PC-3 (cell line): ENCODE measurements at regions of chr20 and their contacts with region 1.

Region 1: DNA sequence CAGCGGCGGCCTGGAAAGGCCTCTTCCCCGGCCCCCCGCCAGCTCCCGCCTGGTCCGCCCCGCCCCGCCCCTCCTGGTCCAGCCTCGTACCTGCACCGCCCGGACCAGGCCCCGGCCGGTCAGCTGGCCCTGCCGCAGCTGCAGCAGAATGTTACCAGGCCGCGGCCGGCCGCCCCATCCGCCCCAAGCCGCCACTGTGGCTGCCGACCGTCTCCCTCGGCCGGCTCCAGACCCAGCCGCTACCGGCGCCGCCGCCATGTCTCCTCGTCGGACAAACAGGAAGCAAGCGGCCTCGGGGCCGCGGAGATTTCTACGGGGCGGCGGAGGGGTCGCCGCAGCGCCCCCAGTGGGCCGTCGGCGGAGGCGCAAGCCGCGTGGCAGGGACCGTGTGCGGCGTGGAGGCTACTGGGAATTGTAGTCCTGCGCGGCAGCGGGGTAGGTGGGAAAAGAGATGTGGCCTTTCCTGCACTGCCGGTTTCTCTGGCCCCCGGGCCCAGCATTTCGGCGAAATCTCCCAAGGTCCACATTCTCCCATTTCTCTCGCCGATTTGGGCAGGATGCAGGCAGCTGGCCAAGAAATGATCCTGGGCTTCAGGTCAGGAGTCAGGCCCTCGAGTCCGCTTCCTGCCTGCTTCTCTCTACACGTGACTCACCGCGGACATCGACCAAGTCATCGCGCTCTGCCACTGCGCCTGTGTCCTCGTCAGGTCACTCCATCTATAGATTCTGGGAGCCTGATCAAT is at the start of gene TRPC4AP:
- DNase-seq: peak; percentile 94
- ATAC-seq: peak; percentile 88
- H3K4me3 ChIP-seq: peak within 1 kb of the TSS; percentile 97
- H3K27ac ChIP-seq: peak within 1 kb of the TSS; percentile 65
- H3K4me1 ChIP-seq: peaks cover 20% of the 10 kb centered on the region
- H3K27me3 ChIP-seq: no peaks in the 10 kb centered on the region
- CTCF ChIP-seq: peak; percentile 92
- total RNA-seq, gene TRPC4AP: 46.9 and 52.6 TPM in 2 replicates

Region 2: GRCh38 chr20:34876162-34877001 is 216.3 kb before region 1 on chr20 and contains the start of gene ACSS2:
- CTCF ChIA-PET with region 1: interaction called, 7 read pairs
- POLR2A ChIA-PET with region 1: no interaction called
- intact Hi-C with region 1: loop called (anchors 5 kb)
- DNase-seq: peak; percentile 98
- ATAC-seq: peak; percentile 85
- H3K4me3 ChIP-seq: peak within 1 kb of the TSS; percentile 84
- H3K27ac ChIP-seq: peak within 1 kb of the TSS; percentile 52
- H3K4me1 ChIP-seq: peaks cover 20% of the 10 kb centered on the region
- H3K27me3 ChIP-seq: no peaks in the 10 kb centered on the region
- CTCF ChIP-seq: no peak
- total RNA-seq, gene ACSS2: 78.9 and 125 TPM in 2 replicates

Region 3: GRCh38 chr20:34904202-34904621 is 188.5 kb before region 1 on chr20:
- CTCF ChIA-PET with region 1: no interaction called
- POLR2A ChIA-PET with region 1: no interaction called
- intact Hi-C with region 1: no loop called
- DNase-seq: no peak
- ATAC-seq: no peak
- H3K4me3 ChIP-seq: no peak overlapping the region
- H3K27ac ChIP-seq: no peak overlapping the region
- H3K4me1 ChIP-seq: peaks cover 25% of the 10 kb centered on the region
- H3K27me3 ChIP-seq: no peaks in the 10 kb centered on the region
- CTCF ChIP-seq: no peak

Region 4: GRCh38 chr20:35013421-35014411 is 79.0 kb before region 1 on chr20:
- CTCF ChIA-PET with region 1: no interaction called
- POLR2A ChIA-PET with region 1: no interaction called
- intact Hi-C with region 1: no loop called
- DNase-seq: no peak
- ATAC-seq: 0 out of 2 replicates have a peak, but pooled peaks have one; percentile 21
- H3K4me3 ChIP-seq: no peak overlapping the region
- H3K27ac ChIP-seq: no peak overlapping the region
- H3K4me1 ChIP-seq: no peaks in the 10 kb centered on the region
- H3K27me3 ChIP-seq: no peaks in the 10 kb centered on the region
- CTCF ChIP-seq: no peak

Region 5: DNA sequence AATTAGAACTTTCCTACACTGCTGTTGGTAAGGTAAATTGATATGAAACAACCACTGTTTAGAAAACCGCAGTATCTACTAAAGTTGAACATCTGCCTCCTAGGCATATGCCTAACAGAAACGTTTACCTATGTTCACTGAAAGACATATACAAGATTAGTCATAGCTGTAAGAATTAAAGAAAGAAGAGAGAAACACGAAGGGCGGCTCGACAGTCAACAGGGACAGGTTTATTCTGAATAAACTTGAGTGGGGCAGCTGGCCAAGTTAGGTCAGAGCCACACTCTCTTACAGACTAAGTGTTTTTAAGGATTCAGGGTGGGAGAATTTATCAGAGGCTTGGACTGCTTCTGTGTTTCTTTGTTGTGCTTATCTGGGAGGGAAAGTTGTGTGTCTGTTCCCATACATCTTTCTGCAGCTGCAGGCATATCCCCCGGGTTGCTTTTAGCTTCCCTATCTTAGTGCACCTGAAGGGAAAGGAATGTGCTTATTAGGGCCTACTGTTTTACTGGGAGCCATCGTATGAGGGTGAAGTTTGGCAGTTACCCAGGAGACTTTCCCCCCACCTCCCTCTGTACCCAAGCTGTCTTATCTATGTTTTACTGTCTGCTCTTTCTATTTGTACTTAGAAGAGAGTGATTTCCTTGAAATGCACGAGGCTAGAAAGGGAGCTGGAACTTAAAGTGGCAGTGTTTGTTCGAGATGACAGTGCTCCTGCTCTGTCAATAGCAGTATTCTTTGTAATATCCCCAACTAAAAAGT is 99.6 kb after region 1 on chr20:
- CTCF ChIA-PET with region 1: interaction called, 10 read pairs
- POLR2A ChIA-PET with region 1: no interaction called
- intact Hi-C with region 1: no loop called
- DNase-seq: peak; percentile 88
- ATAC-seq: peak; percentile 94
- H3K4me3 ChIP-seq: no peak overlapping the region
- H3K27ac ChIP-seq: 0 out of 2 replicates have a peak overlapping the region, but pooled peaks have one; percentile 18
- H3K4me1 ChIP-seq: peaks cover 27% of the 10 kb centered on the region
- H3K27me3 ChIP-seq: no peaks in the 10 kb centered on the region
- CTCF ChIP-seq: no peak

Region 6: DNA sequence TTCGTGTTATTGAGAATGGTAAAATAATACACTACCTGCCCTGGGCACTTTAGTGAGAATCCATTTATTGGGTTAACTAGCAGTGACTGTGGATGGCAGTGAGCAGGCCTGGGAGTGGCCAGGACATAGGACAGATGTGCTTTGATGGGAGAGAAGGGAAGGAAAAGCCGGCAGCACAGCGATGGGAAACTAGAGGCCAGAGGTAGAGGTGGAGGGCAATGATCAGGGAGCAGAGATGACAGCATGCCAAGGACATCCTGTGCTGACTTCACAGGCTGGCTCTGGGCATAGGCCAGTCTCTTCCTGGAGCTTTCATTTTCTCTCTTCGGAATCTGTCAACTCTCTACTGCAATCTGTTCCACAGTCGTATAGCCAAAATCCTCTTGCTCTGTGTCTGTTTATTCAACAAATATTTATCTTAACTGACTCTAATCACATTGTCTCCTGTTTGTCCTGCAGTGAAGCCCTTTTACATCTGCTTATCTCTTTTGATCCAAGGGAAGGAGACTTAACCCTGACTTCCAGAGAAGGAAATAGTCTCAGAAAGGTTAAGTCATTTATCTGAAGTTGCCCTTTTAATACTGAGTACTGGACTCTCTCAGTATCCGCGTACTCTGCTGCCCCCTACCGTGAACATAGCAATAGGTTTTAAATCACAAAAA is 115.4 kb after region 1 on chr20:
- CTCF ChIA-PET with region 1: interaction called, 24 read pairs
- POLR2A ChIA-PET with region 1: no interaction called
- intact Hi-C with region 1: loop called (anchors 1 kb)
- DNase-seq: peak; percentile 86
- ATAC-seq: peak; percentile 98
- H3K4me3 ChIP-seq: peak overlapping the region; percentile 32; the same call in 1 of the 2 replicates
- H3K27ac ChIP-seq: no peak overlapping the region
- H3K4me1 ChIP-seq: no peaks in the 10 kb centered on the region
- H3K27me3 ChIP-seq: no peaks in the 10 kb centered on the region
- CTCF ChIP-seq: peak; percentile 93

Region 7: GRCh38 chr20:35263532-35264223 is 171.0 kb after region 1 on chr20:
- CTCF ChIA-PET with region 1: interaction called, 19 read pairs
- POLR2A ChIA-PET with region 1: no interaction called
- intact Hi-C with region 1: no loop called
- DNase-seq: peak; percentile 49
- ATAC-seq: peak; percentile 61
- H3K4me3 ChIP-seq: peak overlapping the region; percentile 26; the same call in 1 of the 2 replicates
- H3K27ac ChIP-seq: peak overlapping the region; percentile 32
- H3K4me1 ChIP-seq: peaks cover 19% of the 10 kb centered on the region
- H3K27me3 ChIP-seq: no peaks in the 10 kb centered on the region
- CTCF ChIP-seq: no peak

Region 8: DNA sequence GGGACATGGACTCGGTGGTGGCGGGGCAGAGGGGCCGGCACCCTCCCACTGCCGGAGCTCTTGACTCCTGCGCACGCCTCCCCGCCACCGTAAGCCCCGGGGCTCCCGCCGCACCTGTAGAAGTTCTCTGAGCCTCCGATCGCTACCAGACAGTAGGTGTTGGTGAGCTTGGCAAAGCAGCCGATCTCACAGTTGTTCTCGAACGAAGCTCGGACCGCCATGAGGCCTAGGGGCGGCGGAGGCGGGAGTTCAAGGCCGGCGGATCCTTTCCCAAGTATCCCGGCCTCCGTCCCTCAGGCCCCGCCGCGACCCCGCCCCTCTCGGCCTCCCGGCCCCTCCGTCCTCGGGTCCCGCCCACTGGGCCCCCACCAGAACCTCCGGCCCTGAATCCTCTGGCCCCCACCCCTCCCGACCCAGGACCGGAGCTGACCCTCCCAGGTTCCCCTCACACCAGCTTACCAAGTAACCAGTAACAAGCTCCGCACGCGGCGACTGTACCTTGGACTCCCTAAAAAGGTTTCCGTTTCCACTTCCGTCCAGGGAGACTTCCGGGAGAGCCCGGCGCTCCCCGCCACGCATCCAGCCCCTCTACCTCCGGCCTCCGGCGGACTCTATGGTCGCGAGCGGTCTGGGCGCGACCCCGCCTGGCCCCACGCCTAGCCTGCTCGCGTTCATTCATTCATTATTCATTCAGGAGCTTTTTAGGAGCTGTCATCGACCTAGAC is 191.7 kb after region 1 on chr20 and contains the start of gene EIF6:
- CTCF ChIA-PET with region 1: interaction called, 11 read pairs
- POLR2A ChIA-PET with region 1: no interaction called
- intact Hi-C with region 1: no loop called
- DNase-seq: peak; percentile 89
- ATAC-seq: peak; percentile 90
- H3K4me3 ChIP-seq: peak within 1 kb of the TSS; percentile 98
- H3K27ac ChIP-seq: peak within 1 kb of the TSS; percentile 72
- H3K4me1 ChIP-seq: peaks cover 16% of the 10 kb centered on the region
- H3K27me3 ChIP-seq: no peaks in the 10 kb centered on the region
- CTCF ChIP-seq: no peak
- total RNA-seq, gene EIF6: 292 and 294 TPM in 2 replicates

Region 9: DNA sequence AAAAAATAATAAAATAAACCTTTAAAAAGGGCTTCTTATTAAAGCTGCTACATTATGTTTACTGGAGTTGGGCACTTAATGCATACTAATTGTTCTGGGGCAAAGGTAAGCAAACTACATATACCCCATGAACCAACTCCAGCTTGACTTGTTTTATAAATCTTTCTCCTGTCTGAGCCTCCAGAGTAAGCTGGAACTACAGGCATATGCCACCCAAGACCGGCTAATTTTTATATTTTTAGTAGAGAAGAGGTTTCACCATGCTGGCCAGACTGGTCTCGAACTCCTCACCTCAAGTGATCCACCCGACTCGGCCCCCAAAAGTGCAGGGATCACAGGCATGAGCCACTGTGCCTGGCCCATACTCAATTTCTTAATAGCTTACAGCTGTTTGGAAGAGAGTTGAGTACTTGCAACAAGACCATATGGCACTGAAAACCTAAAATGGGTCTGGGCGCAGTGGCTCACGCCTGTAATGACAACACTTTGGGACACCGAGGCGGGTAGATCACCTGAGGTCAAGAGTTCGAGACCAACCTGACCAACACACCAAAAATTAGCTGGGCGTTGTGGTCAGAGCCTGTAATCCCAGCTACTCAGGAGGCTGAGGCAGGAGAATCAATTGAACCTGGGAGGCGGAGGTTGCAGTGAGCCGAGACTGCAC is 626.4 kb after region 1 on chr20:
- CTCF ChIA-PET with region 1: no interaction called
- POLR2A ChIA-PET with region 1: interaction called, 30 read pairs
- intact Hi-C with region 1: no loop called
- DNase-seq: no peak
- ATAC-seq: no peak
- H3K4me3 ChIP-seq: no peak overlapping the region
- H3K27ac ChIP-seq: no peak overlapping the region
- H3K4me1 ChIP-seq: no peaks in the 10 kb centered on the region
- H3K27me3 ChIP-seq: no peaks in the 10 kb centered on the region
- CTCF ChIP-seq: no peak